Naive thymus-derived CD8-positive, alpha-beta T cell (primary cell): ENCODE measurements at regions of chr6 and their contacts with region 1.

Region 1: GRCh38 chr6:3023663-3024483 is 24.2 kb downstream of the NQO2 start:
- DNase-seq: peak; percentile 61 to 86 (median 68)
- ATAC-seq: peak; percentile 79 to 83
- H3K4me3 Mint-ChIP-seq: peak overlapping the region; percentile 78 to 97 (median 90)
- H3K27ac Mint-ChIP-seq: peak overlapping the region; percentile 14 to 91 (median 83)
- H3K4me1 Mint-ChIP-seq: peaks cover 23 to 57% (median 54%) of the 10 kb centered on the region in 4 donors
- H3K27me3 Mint-ChIP-seq: no peaks in the 10 kb centered on the region

Region 2: GRCh38 chr6:2999618-3000557 is 24.0 kb before region 1 on chr6 and contains the start of gene NQO2:
- POLR2A ChIA-PET with region 1: interaction called, 53 read pairs
- DNase-seq: peak; percentile 73 to 93 (median 85)
- ATAC-seq: peak; percentile 72 to 79
- H3K4me3 Mint-ChIP-seq: peak within 1 kb of the TSS; percentile 85 to 97 (median 90)
- H3K27ac Mint-ChIP-seq: peak within 1 kb of the TSS; percentile 81 to 97 (median 92)
- H3K4me1 Mint-ChIP-seq: peaks cover 11 to 29% (median 25%) of the 10 kb centered on the region in 4 donors
- H3K27me3 Mint-ChIP-seq: no peaks in the 10 kb centered on the region
- polyA plus RNA-seq, gene NQO2: 37.9 to 48.1 (median 39.0) TPM

Region 3: DNA sequence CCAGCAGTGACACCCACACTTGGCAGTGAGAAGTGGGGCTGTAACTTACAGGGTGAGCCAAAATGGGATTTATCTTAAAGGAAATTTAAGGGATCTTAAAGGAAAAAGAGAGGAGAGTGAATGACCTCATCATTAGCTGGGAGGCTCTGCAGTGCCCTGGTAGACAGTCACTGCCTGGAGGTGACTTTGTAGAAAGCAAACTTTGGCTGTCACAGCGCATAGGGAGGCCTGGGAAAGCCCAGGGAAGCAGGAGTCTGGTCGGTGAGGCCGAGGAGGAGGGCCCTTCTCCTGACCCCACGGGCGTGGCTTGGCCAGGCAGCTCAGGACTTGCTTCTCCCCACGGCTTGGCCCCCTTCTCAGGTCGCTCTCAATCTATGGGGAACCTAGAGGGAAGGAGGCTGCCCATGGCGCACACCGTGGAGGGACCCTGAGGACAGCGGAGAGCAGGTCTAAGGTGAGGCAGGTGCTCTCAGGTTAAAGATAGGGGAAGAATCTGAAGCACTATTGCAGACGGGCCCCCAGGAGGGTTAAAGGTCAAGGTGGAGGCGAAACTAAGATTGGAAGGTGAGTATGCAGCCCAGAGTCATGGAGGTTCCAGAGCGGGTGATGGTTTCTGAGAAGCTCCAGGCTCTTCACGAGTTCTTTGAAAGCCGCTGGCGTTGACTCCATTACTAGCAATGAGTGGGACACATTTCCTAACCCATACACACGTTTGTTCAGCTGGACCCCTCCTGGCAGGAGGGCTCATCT is 28.8 kb after region 1 on chr6:
- POLR2A ChIA-PET with region 1: interaction called, 24 read pairs
- DNase-seq: no peak
- ATAC-seq: no peak
- H3K4me3 Mint-ChIP-seq: peak overlapping the region; percentile 63 to 83 (median 78)
- H3K27ac Mint-ChIP-seq: peak overlapping the region in 7 of 10 donors; percentile 19 to 90 (median 69)
- H3K4me1 Mint-ChIP-seq: peaks cover 6 to 24% (median 19%) of the 10 kb centered on the region in 4 donors
- H3K27me3 Mint-ChIP-seq: peaks cover 0 to 9% (median 0%) of the 10 kb centered on the region in 5 donors